T-cell (primary cell): ENCODE measurements at regions of chr6 and their contacts with region 1.

Region 1: GRCh38 chr6:133198725-133199124 is 42.4 kb upstream of the EYA4 start:
- DNase-seq: no peak
- ATAC-seq: no peak
- H3K4me3 ChIP-seq: no peak overlapping the region
- H3K4me3 Mint-ChIP-seq: no peak overlapping the region
- H3K27ac ChIP-seq: no peak overlapping the region
- H3K27ac Mint-ChIP-seq: no peak overlapping the region
- H3K4me1 ChIP-seq: no peaks in the 10 kb centered on the region
- H3K4me1 Mint-ChIP-seq: no peaks in the 10 kb centered on the region
- H3K27me3 ChIP-seq: no peaks in the 10 kb centered on the region
- H3K27me3 Mint-ChIP-seq: no peaks in the 10 kb centered on the region

Region 2: DNA sequence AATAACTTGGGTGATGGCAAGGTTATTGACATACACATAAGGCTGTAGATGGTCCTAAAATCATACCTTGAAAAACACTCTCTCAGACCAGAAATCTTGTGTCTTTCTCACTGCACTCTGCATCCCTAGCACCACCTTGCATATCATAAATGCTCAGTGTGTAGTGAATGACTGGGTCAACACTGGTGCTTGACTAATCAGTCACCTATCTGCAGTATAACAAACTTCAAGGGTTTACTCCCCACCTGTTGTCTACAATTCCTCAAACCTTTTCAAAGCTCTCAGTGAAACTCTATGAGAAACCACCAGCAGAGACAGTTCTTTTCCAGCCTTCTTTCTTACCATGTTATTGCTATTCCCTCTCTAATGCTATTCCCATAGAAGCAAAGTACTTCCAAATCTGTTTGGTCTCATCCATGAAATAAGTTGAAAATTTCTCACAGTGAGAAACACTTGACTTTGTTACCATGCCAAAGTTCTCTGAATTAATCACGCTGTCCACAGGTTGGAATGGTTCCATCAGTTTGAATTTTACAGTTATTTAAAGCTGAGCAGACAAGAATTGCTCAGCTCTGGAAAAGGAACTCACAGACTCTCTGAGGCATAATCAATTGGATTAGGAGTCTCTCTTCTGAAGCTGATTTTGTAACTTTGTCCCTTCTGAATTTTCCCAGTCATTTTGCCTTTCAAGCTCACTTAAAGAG is 62.4 kb before region 1 on chr6:
- CTCF ChIA-PET with region 1: no interaction called
- POLR2A ChIA-PET with region 1: no interaction called
- DNase-seq: no peak
- ATAC-seq: no peak
- H3K4me3 ChIP-seq: no peak overlapping the region
- H3K4me3 Mint-ChIP-seq: no peak overlapping the region
- H3K27ac ChIP-seq: no peak overlapping the region
- H3K27ac Mint-ChIP-seq: no peak overlapping the region
- H3K4me1 ChIP-seq: no peaks in the 10 kb centered on the region
- H3K4me1 Mint-ChIP-seq: no peaks in the 10 kb centered on the region
- H3K27me3 ChIP-seq: no peaks in the 10 kb centered on the region
- H3K27me3 Mint-ChIP-seq: peaks cover 0 to 4% of the 10 kb centered on the region in 2 donors

Region 3: GRCh38 chr6:133187114-133187513 is 11.6 kb before region 1 on chr6:
- CTCF ChIA-PET with region 1: interaction called in 1 of 2 experiments, 10 read pairs
- POLR2A ChIA-PET with region 1: interaction called in 1 of 2 experiments, 9 read pairs
- DNase-seq: no peak
- ATAC-seq: no peak
- H3K4me3 ChIP-seq: no peak overlapping the region
- H3K4me3 Mint-ChIP-seq: no peak overlapping the region
- H3K27ac ChIP-seq: no peak overlapping the region
- H3K27ac Mint-ChIP-seq: no peak overlapping the region
- H3K4me1 ChIP-seq: no peaks in the 10 kb centered on the region
- H3K4me1 Mint-ChIP-seq: no peaks in the 10 kb centered on the region
- H3K27me3 ChIP-seq: no peaks in the 10 kb centered on the region
- H3K27me3 Mint-ChIP-seq: peaks cover 0 to 12% of the 10 kb centered on the region in 2 donors